ENCODE measurements at regions of chr7 and their contacts with region 1.

Region 1: DNA sequence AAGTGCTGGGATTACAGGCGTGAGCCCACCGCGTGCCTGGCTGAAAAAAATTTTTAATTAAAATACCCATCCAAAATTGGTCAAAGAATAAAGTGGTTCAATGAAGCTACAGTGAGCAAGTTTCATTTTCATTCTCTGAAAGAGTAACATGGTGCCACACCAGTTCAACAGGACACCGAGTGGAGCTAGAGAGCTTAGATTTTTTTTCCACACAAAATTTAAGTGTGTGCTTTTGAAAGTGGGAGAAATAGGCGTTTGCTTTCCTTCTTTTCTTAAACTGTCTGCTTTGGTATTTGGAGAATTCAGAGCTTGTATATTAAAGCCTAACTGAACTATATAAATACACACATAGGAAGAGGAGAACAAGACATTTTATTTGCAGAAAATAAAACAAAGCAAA is 43.4 kb downstream of the BPGM start:
- DNase-seq: peak in 1 of 2 experiments; percentile 42
- H3K4me3 ChIP-seq: no peak overlapping the region
- H3K4me3 Mint-ChIP-seq: no peak overlapping the region
- H3K27ac Mint-ChIP-seq: no peak overlapping the region
- H3K4me1 ChIP-seq: peaks cover 12% of the 10 kb centered on the region
- H3K4me1 Mint-ChIP-seq: peaks cover 30% of the 10 kb centered on the region
- H3K27me3 ChIP-seq: no peaks in the 10 kb centered on the region
- H3K27me3 Mint-ChIP-seq: no peaks in the 10 kb centered on the region
- CTCF ChIP-seq: peak; percentile 35 to 64

Region 2: GRCh38 chr7:134701272-134701671 is 11.3 kb after region 1 on chr7:
- CTCF ChIA-PET with region 1: interaction called, 15 read pairs
- POLR2A ChIA-PET with region 1: no interaction called
- intact Hi-C with region 1: no loop called
- DNase-seq: peak in 1 of 2 experiments; percentile 28
- H3K4me3 ChIP-seq: no peak overlapping the region
- H3K4me3 Mint-ChIP-seq: no peak overlapping the region
- H3K27ac Mint-ChIP-seq: no peak overlapping the region
- H3K4me1 ChIP-seq: peaks cover 24% of the 10 kb centered on the region
- H3K4me1 Mint-ChIP-seq: peaks cover 7% of the 10 kb centered on the region
- H3K27me3 ChIP-seq: no peaks in the 10 kb centered on the region
- H3K27me3 Mint-ChIP-seq: no peaks in the 10 kb centered on the region
- CTCF ChIP-seq: peak in 1 of 2 experiments; percentile 35

Region 3: DNA sequence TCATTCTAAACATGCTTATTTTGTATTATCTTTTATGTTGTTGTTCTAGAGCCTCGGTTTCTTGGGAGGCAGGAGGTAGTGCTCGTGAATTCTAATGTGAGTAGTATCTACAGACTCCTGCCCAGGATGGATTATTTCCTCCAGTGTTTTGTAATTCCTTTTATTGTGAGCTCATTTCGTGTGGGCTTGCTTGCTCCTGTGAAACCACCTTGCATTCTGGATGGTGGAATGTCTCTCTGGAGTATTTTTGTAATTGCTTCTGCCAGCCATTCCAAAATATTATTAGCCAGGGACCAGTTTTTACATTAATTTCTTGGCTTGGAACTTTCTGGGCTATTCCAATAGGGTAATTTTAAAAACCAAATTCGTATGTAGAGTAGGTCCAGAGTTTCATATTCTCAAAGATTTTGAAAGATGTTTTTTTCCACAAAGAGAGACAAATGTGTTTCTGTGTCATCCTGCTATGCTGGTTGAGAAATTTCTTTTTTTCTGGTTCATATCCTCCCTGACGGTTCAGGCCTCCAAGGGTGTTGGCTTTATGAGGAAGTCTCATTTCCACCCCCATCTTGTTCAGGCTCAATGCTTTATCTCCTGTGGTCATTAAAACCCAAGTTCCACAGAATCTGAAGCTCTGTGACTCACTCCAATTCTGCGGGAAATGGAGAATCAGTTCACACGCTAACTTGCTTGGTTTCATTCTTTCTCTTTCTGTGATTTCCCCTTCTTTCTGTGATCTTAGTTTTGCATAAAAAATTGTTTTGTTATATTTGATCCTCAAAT is 47.7 kb after region 1 on chr7:
- CTCF ChIA-PET with region 1: no interaction called
- POLR2A ChIA-PET with region 1: no interaction called
- intact Hi-C with region 1: no loop called
- DNase-seq: no peak
- H3K4me3 ChIP-seq: no peak overlapping the region
- H3K4me3 Mint-ChIP-seq: no peak overlapping the region
- H3K27ac Mint-ChIP-seq: no peak overlapping the region
- H3K4me1 ChIP-seq: peaks cover 13% of the 10 kb centered on the region
- H3K4me1 Mint-ChIP-seq: peaks cover 10% of the 10 kb centered on the region
- H3K27me3 ChIP-seq: no peaks in the 10 kb centered on the region; the same call in 1 of the 2 replicates
- H3K27me3 Mint-ChIP-seq: no peaks in the 10 kb centered on the region
- CTCF ChIP-seq: no peak

Region 4: GRCh38 chr7:134750083-134751062 is 60.4 kb after region 1 on chr7:
- CTCF ChIA-PET with region 1: no interaction called
- POLR2A ChIA-PET with region 1: no interaction called
- intact Hi-C with region 1: loop called (anchors 2 kb)
- DNase-seq: peak; percentile 62 to 68
- H3K4me3 ChIP-seq: no peak overlapping the region
- H3K4me3 Mint-ChIP-seq: no peak overlapping the region
- H3K27ac Mint-ChIP-seq: no peak overlapping the region
- H3K4me1 ChIP-seq: no peaks in the 10 kb centered on the region
- H3K4me1 Mint-ChIP-seq: no peaks in the 10 kb centered on the region
- H3K27me3 ChIP-seq: no peaks in the 10 kb centered on the region
- H3K27me3 Mint-ChIP-seq: no peaks in the 10 kb centered on the region
- CTCF ChIP-seq: peak; percentile 58 to 87

Region 5: GRCh38 chr7:134845468-134845867 is 155.5 kb after region 1 on chr7:
- CTCF ChIA-PET with region 1: interaction called, 3 read pairs
- POLR2A ChIA-PET with region 1: no interaction called
- intact Hi-C with region 1: loop called (anchors 2 kb)
- DNase-seq: peak; percentile 48 to 53
- H3K4me3 ChIP-seq: no peak overlapping the region
- H3K4me3 Mint-ChIP-seq: no peak overlapping the region
- H3K27ac Mint-ChIP-seq: no peak overlapping the region
- H3K4me1 ChIP-seq: peaks cover 22% of the 10 kb centered on the region
- H3K4me1 Mint-ChIP-seq: peaks cover 33% of the 10 kb centered on the region
- H3K27me3 ChIP-seq: no peaks in the 10 kb centered on the region
- H3K27me3 Mint-ChIP-seq: no peaks in the 10 kb centered on the region
- CTCF ChIP-seq: peak; percentile 42 to 66

Region 6: GRCh38 chr7:134954197-134955082 is 264.4 kb after region 1 on chr7:
- CTCF ChIA-PET with region 1: no interaction called
- POLR2A ChIA-PET with region 1: no interaction called
- intact Hi-C with region 1: loop called (anchors 1 kb)
- DNase-seq: no peak
- H3K4me3 ChIP-seq: no peak overlapping the region
- H3K4me3 Mint-ChIP-seq: no peak overlapping the region
- H3K27ac Mint-ChIP-seq: no peak overlapping the region
- H3K4me1 ChIP-seq: no peaks in the 10 kb centered on the region; the same call in 1 of the 2 replicates
- H3K4me1 Mint-ChIP-seq: peaks cover 4% of the 10 kb centered on the region
- H3K27me3 ChIP-seq: no peaks in the 10 kb centered on the region
- H3K27me3 Mint-ChIP-seq: no peaks in the 10 kb centered on the region
- CTCF ChIP-seq: peak; percentile 37 to 61

Region 7: DNA sequence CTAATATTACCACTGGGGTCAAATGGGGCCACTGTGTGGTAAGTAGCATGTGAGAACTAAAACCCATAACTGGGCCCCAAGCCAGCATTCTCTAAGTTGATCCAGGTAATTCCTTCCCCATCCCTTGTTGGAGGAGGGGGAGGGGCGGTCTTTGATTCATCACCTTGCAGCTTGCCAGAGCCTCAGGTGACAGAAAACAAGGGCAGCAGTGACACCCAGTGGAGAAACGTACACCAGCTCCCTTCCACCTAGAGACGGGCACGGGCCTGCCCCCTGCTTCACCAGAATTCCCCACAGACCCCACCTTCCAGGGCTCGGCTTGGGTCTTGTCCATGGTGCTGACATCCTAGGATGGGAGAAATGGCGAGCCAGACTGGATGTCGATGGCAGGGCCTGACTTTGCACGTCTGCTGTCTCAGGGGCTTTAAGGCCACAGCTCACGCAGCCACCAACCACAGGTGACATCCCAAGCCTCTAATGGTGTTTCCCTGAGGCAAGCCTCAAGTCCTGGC is 645.7 kb after region 1 on chr7:
- CTCF ChIA-PET with region 1: no interaction called
- POLR2A ChIA-PET with region 1: no interaction called
- intact Hi-C with region 1: loop called (anchors 10 kb)
- DNase-seq: peak; percentile 93 to 94
- H3K4me3 ChIP-seq: no peak overlapping the region
- H3K4me3 Mint-ChIP-seq: no peak overlapping the region
- H3K27ac Mint-ChIP-seq: no peak overlapping the region
- H3K4me1 ChIP-seq: peaks cover 5% of the 10 kb centered on the region; the same call in 1 of the 2 replicates
- H3K4me1 Mint-ChIP-seq: peaks cover 7% of the 10 kb centered on the region
- H3K27me3 ChIP-seq: no peaks in the 10 kb centered on the region
- H3K27me3 Mint-ChIP-seq: peaks cover 8% of the 10 kb centered on the region
- CTCF ChIP-seq: peak; percentile 70 to 82

Measured in Caco-2 (cell line).